WTC11 (cell line): ENCODE measurements at regions of chr4 and their contacts with region 1.

Region 1: GRCh38 chr4:136864580-136865185 is 667.6 kb downstream of the PCDH18 start:
- DNase-seq: no peak
- ATAC-seq: peak; percentile 61
- H3K4me3 Mint-ChIP-seq: no peak overlapping the region
- H3K27ac Mint-ChIP-seq: no peak overlapping the region
- H3K4me1 Mint-ChIP-seq: peaks cover 19% of the 10 kb centered on the region
- H3K27me3 Mint-ChIP-seq: no peaks in the 10 kb centered on the region
- CTCF ChIP-seq: peak; percentile 61

Region 2: GRCh38 chr4:136687118-136687517 is 177.6 kb before region 1 on chr4:
- CTCF ChIA-PET with region 1: interaction called, 15 read pairs
- POLR2A ChIA-PET with region 1: no interaction called
- DNase-seq: peak; percentile 14
- ATAC-seq: peak; percentile 88
- H3K4me3 Mint-ChIP-seq: no peak overlapping the region
- H3K27ac Mint-ChIP-seq: no peak overlapping the region
- H3K4me1 Mint-ChIP-seq: peaks cover 40% of the 10 kb centered on the region
- H3K27me3 Mint-ChIP-seq: no peaks in the 10 kb centered on the region
- CTCF ChIP-seq: 0 out of 2 replicates have a peak, but pooled peaks have one; percentile 16

Region 3: GRCh38 chr4:136713140-136713539 is 151.5 kb before region 1 on chr4:
- CTCF ChIA-PET with region 1: interaction called, 47 read pairs
- POLR2A ChIA-PET with region 1: no interaction called
- DNase-seq: no peak
- ATAC-seq: peak; percentile 69
- H3K4me3 Mint-ChIP-seq: no peak overlapping the region
- H3K27ac Mint-ChIP-seq: no peak overlapping the region
- H3K4me1 Mint-ChIP-seq: no peaks in the 10 kb centered on the region
- H3K27me3 Mint-ChIP-seq: no peaks in the 10 kb centered on the region
- CTCF ChIP-seq: no peak

Region 4: DNA sequence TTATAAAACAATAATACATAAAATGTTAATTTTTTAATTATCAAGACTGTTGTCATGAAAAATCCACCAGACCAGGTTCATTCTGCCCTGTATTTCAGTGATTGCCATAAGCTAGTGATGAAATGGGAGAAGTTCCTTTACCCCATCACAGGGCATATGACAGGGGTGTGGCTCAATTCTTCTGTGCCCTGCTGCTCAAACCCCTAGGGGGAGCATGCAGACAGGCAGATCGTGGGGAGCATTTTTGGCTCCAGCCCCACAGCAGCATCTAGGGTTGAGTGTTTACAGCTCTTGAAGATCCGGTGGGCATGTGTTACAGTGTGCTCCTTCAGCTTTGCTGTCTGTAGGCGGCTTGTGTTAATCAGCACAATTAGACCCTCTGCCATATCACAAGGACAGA is 33.1 kb before region 1 on chr4:
- CTCF ChIA-PET with region 1: interaction called, 10 read pairs
- POLR2A ChIA-PET with region 1: no interaction called
- DNase-seq: peak; percentile 41
- ATAC-seq: peak; percentile 89
- H3K4me3 Mint-ChIP-seq: no peak overlapping the region
- H3K27ac Mint-ChIP-seq: no peak overlapping the region
- H3K4me1 Mint-ChIP-seq: no peaks in the 10 kb centered on the region
- H3K27me3 Mint-ChIP-seq: no peaks in the 10 kb centered on the region
- CTCF ChIP-seq: no peak